Activated naive CD4-positive, alpha-beta T cell treated with anti-CD3 and anti-CD28 coated beads, Interleukin-2, amount 10 ng/mL, durations not matched to agents 7 days and 5 days (primary cell): ENCODE measurements at regions of chr7 and their contacts with region 1.

Region 1: GRCh38 chr7:134514663-134515062 is 12.7 kb upstream of the AKR1B10 start:
- DNase-seq: no peak
- H3K4me3 Mint-ChIP-seq: no peak overlapping the region
- H3K27ac Mint-ChIP-seq: no peak overlapping the region
- H3K4me1 Mint-ChIP-seq: no peaks in the 10 kb centered on the region
- H3K27me3 Mint-ChIP-seq: peaks cover 19% of the 10 kb centered on the region

Region 2: DNA sequence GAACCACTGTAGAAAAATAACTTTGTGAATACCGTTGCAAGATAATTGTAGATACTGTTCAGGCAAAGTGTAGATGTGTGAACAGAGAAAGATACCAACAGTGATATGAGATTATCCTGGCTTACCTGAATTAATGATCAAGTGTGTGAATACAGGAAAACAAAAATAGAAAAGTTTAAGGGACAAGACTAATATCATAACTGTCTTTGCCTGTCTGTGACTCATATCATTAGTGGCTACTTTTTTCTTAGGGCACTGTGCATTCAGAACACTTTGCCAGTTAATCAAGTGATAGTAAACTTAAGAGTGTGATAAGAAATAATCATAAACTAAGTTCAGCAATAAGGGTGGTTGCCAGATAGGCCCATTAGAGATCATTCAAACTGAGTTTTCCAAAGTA is 710.5 kb before region 1 on chr7:
- CTCF ChIA-PET with region 1: no interaction called
- DNase-seq: no peak
- H3K4me3 Mint-ChIP-seq: no peak overlapping the region
- H3K27ac Mint-ChIP-seq: no peak overlapping the region
- H3K4me1 Mint-ChIP-seq: no peaks in the 10 kb centered on the region
- H3K27me3 Mint-ChIP-seq: no peaks in the 10 kb centered on the region

Region 3: GRCh38 chr7:134605973-134606923 is 91.6 kb after region 1 on chr7:
- CTCF ChIA-PET with region 1: interaction called, 21 read pairs
- DNase-seq: peak; percentile 70
- H3K4me3 Mint-ChIP-seq: no peak overlapping the region
- H3K27ac Mint-ChIP-seq: no peak overlapping the region
- H3K4me1 Mint-ChIP-seq: peaks cover 4% of the 10 kb centered on the region
- H3K27me3 Mint-ChIP-seq: peaks cover 33% of the 10 kb centered on the region

Region 4: GRCh38 chr7:134612196-134612595 is 97.5 kb after region 1 on chr7:
- CTCF ChIA-PET with region 1: interaction called, 21 read pairs
- DNase-seq: no peak
- H3K4me3 Mint-ChIP-seq: no peak overlapping the region
- H3K27ac Mint-ChIP-seq: no peak overlapping the region
- H3K4me1 Mint-ChIP-seq: peaks cover 10% of the 10 kb centered on the region
- H3K27me3 Mint-ChIP-seq: peaks cover 15% of the 10 kb centered on the region